Caco-2 (cell line): ENCODE measurements at regions of chr7 and their contacts with region 1.

Region 1: DNA sequence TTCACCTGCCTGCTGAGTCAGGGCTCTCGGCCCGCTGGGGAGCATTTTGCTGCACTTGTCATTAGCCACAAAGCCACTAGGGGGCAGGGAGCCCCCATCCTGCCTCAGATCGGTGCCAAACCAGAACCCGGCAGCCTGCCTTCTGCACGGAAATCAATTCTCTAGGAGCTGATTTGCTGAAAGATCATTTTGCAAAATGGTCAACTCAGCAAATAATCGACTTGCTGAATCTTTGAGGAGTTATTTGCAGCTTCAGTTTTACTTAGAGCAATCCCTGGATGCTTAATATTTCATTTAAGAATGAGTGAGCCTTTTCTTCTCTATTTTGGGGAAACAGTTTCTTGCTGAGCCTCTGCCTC is 1.7 kb upstream of the GIMAP8 start:
- DNase-seq: peak; percentile 60 to 79
- H3K4me3 ChIP-seq: no peak overlapping the region
- H3K4me3 Mint-ChIP-seq: no peak overlapping the region
- H3K27ac Mint-ChIP-seq: no peak overlapping the region
- H3K4me1 ChIP-seq: no peaks in the 10 kb centered on the region
- H3K4me1 Mint-ChIP-seq: peaks cover 7% of the 10 kb centered on the region
- H3K27me3 ChIP-seq: 0 out of 2 replicates have a peak, but pooled peaks cover 2% of the 10 kb centered on the region
- H3K27me3 Mint-ChIP-seq: peaks cover 23% of the 10 kb centered on the region
- CTCF ChIP-seq: peak; percentile 93 to 97

Region 2: DNA sequence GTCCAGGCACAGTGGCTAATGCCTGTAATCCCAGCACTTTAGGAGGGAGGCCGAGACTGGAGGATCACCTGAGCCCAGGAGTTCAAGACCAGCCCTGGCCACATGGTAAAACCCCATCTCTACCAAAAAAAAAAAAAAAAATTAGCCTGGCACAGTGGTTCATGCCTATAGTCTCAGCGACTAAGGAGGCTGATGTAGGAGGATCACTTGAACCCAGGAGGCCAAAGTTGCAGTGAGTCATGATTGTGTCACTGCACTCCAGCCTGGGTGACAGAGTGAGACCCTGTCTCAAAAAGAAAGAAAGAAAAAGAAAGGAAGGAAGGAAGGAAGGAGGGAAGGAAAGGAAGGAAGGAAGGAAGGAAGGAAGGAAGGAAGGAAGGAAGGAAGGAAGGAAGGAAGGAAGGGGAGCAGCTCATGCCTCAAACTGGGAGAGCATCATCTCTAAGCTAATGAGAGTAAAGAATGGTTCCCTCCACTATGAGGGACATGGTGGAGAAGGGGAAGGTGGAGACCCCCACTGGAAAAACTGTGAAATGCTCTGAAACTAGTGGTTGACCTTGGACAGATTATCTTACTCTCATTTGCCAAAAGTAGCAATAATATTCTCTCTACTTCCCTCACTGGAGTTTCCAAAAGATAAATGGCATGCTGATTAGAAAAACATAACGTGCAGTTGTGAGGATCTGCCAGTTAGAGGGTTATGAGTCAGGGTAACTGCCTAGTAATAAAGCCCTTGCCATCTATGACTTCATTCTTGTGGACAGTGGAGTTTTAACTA is 305.2 kb after region 1 on chr7:
- CTCF ChIA-PET with region 1: interaction called, 10 read pairs
- POLR2A ChIA-PET with region 1: no interaction called
- intact Hi-C with region 1: loop called (anchors 1 kb)
- DNase-seq: peak in 1 of 2 experiments; percentile 24
- H3K4me3 ChIP-seq: no peak overlapping the region
- H3K4me3 Mint-ChIP-seq: no peak overlapping the region
- H3K27ac Mint-ChIP-seq: no peak overlapping the region
- H3K4me1 ChIP-seq: no peaks in the 10 kb centered on the region
- H3K4me1 Mint-ChIP-seq: no peaks in the 10 kb centered on the region
- H3K27me3 ChIP-seq: no peaks in the 10 kb centered on the region; the same call in 1 of the 2 replicates
- H3K27me3 Mint-ChIP-seq: peaks cover 4% of the 10 kb centered on the region
- CTCF ChIP-seq: peak; percentile 22 to 61